Activated T-helper 2 cell treated with anti-CD3 and anti-CD28 coated beads, Interferon-gamma antibody, Interleukin-2, Interleukin-4, amounts not matched to agents 10 μg/mL and 5 μg/mL and 100 μg/mL, durations not matched to agents 14 hours and 24 hours and 36 hours (primary cell): ENCODE measurements at regions of chr12 and their contacts with region 1.

Region 1: DNA sequence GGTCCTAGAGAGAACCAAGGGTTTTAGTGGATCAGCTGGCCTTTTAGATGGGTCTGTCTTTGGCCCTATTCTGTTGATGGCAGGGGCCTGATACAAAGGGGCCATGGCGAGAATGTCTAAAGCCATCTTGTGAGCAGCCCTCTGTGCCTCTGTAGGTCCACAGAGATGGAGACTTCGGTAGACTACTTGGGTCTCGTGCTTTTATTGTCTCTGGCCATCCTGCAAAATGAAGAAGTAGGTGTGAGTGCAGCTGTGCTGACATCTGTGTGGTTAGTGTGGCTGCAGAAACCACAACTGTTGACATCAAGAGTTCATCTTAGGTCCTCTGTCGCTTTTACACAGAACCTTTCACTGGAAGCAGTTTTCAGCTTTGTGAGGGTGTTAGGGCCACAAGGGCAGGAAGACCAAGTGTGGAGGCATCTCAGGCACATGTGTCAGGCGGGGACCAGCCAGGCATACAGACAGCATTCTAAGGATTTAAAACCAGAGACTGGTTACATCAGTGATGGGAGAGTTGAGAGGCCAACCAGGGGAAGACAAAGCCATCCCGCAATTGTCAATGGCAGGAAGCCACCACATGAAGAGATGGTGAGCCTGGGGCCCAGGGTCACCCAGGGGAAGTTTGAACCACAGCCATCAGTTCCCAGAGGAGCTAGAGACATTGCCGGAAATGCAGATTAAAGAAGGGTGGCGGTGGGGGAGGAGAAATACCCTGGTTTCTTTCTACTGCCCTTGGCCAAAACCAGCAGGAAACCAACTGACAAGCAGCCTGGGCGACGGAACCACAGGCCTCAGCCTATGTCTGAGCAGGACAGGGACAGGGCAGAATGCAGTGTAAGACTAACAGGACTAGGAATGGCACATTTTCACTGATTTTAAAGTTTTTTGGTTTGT is 13.0 kb upstream of the TPCN1 start:
- DNase-seq: peak; percentile 69
- H3K4me3 Mint-ChIP-seq: peak overlapping the region; percentile 57
- H3K27ac Mint-ChIP-seq: peak overlapping the region; percentile 97
- H3K4me1 Mint-ChIP-seq: peaks cover 58% of the 10 kb centered on the region
- H3K27me3 Mint-ChIP-seq: no peaks in the 10 kb centered on the region

Region 2: GRCh38 chr12:111557271-111558106 is 1650.8 kb before region 1 on chr12:
- intact Hi-C with region 1: no loop called
- DNase-seq: no peak
- H3K4me3 Mint-ChIP-seq: no peak overlapping the region
- H3K27ac Mint-ChIP-seq: peak overlapping the region; percentile 12
- H3K4me1 Mint-ChIP-seq: peaks cover 11% of the 10 kb centered on the region
- H3K27me3 Mint-ChIP-seq: no peaks in the 10 kb centered on the region

Region 3: DNA sequence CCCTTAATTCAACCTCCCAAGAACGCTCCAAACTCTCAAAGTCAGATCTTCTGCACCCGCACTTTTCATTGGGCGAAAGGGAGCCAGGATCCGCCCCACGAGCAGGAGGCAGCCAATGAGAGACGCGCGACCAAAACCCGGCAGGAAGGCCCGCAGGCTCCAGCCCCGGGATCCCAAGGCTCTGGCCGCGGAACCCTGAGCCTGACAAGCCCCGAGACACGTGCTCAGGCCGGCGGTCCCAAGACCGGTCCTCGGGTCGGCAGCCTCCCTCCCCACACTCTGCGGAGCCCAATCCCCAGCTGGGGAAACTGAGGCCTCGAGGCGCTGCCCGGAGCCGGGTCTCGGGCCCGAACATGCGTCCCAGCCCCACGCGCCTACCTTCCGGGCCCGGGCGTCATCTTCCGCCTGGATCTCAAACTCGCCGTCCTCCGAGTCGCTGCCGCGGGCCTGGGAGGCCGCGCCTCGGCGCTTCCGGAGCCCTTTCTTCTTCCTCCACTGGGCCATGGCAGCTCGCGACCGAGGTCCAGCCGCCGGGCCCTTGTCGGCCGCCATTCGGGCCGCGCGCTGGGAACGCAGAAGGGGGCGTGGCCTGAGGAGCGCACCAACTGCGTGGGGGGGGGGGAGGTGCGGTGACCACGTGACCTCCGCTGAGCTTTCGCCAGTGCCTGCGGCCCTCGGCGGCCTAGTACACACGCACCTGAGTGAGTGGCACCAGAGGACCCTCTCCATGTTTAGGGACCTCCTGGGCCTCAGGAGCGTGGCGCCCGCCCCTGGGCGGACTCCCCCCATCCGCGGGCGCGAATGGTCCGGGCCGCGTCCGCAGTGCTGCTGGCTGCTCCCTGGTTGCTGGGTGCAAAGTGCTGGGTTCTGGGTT is 23.2 kb before region 1 on chr12 and contains the starts of genes DDX54 and RITA1:
- intact Hi-C with region 1: loop called (anchors 1 kb)
- DNase-seq: peak; percentile 88
- H3K4me3 Mint-ChIP-seq: peak within 1 kb of the TSS; percentile 90
- H3K27ac Mint-ChIP-seq: peak within 1 kb of the TSS; percentile 93
- H3K4me1 Mint-ChIP-seq: peaks cover 26% of the 10 kb centered on the region
- H3K27me3 Mint-ChIP-seq: no peaks in the 10 kb centered on the region
- total RNA-seq, gene DDX54: 115 and 118 TPM in 2 replicates
- total RNA-seq, gene RITA1: 26.8 and 27.2 TPM in 2 replicates

Region 4: GRCh38 chr12:113261847-113262470 is 53.7 kb after region 1 on chr12:
- intact Hi-C with region 1: loop called (anchors 1 kb)
- DNase-seq: peak; percentile 38
- H3K4me3 Mint-ChIP-seq: peak overlapping the region; percentile 54
- H3K27ac Mint-ChIP-seq: peak overlapping the region; percentile 52
- H3K4me1 Mint-ChIP-seq: peaks cover 49% of the 10 kb centered on the region
- H3K27me3 Mint-ChIP-seq: no peaks in the 10 kb centered on the region

Region 5: DNA sequence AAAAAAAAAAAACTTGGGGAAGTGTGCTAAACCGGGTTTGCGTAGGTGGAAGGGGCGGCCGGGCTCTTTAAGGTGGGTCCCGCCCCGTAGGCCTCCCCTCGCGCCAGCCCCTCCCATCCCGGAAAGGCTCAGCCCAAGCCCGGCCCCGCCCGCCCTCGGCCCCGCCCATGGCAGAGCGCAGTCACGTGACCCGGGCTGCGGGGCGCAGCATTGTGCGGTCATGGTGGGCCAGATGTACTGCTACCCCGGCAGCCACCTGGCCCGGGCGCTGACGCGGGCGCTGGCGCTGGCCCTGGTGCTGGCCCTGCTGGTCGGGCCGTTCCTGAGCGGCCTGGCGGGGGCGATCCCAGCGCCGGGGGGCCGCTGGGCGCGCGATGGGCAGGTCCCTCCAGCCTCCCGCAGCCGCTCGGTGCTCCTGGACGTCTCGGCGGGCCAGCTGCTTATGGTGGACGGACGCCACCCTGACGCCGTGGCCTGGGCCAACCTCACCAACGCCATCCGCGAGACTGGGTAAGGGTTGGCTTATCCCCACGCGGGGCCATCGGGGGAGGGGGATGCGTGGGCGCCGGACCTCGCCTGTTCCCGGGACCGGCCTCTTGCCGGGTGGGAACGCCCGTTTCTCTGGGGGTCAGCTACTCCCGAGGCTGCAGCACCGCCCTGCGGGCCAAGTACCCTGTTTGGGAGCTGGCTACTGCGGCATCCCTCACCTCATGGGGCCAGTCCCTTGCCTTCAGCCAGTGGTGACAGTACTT is 150.3 kb after region 1 on chr12 and contains the start of gene PLBD2:
- intact Hi-C with region 1: loop called (anchors 5 kb)
- DNase-seq: peak; percentile 88
- H3K4me3 Mint-ChIP-seq: peak within 1 kb of the TSS; percentile 85
- H3K27ac Mint-ChIP-seq: peak within 1 kb of the TSS; percentile 59
- H3K4me1 Mint-ChIP-seq: peaks cover 12% of the 10 kb centered on the region
- H3K27me3 Mint-ChIP-seq: peaks cover 1% of the 10 kb centered on the region
- total RNA-seq, gene PLBD2: 16.2 and 18.6 TPM in 2 replicates

Region 6: GRCh38 chr12:113965951-113966797 is 757.9 kb after region 1 on chr12 and contains the start of gene RBM19:
- intact Hi-C with region 1: loop called (anchors 10 kb)
- DNase-seq: peak; percentile 95
- H3K4me3 Mint-ChIP-seq: peak within 1 kb of the TSS; percentile 100
- H3K27ac Mint-ChIP-seq: peak within 1 kb of the TSS; percentile 100
- H3K4me1 Mint-ChIP-seq: peaks cover 48% of the 10 kb centered on the region
- H3K27me3 Mint-ChIP-seq: peaks cover 2% of the 10 kb centered on the region
- total RNA-seq, gene RBM19: 89.6 and 96.8 TPM in 2 replicates